A549 (cell line): ENCODE measurements at regions of chr19 and their contacts with region 1.

Region 1: GRCh38 chr19:10580979-10581631 is 6.0 kb downstream of the AP1M2 start:
- DNase-seq: peak; percentile 56 to 91
- ATAC-seq: peak; percentile 66 to 71
- H3K4me3 ChIP-seq: no peak overlapping the region
- H3K27ac ChIP-seq: peak overlapping the region in 1 of 2 experiments; percentile 53; a peak in 1 of 6 replicates
- H3K4me1 ChIP-seq: 0 out of 3 replicates have a peak, but pooled peaks cover 5% of the 10 kb centered on the region
- CTCF ChIP-seq: peak; percentile 75
- EP300 ChIP-seq: no peak
- POLR2A ChIP-seq: no peak
- RAD21 ChIP-seq: peak; percentile 87 to 93

Region 2: GRCh38 chr19:10543420-10544241 is 37.5 kb before region 1 on chr19 and contains the start of gene ATG4D:
- CTCF ChIA-PET with region 1: interaction called, 10 read pairs
- POLR2A ChIA-PET with region 1: no interaction called
- DNase-seq: peak; percentile 60 to 88
- ATAC-seq: peak; percentile 89 to 90
- H3K4me3 ChIP-seq: peak within 1 kb of the TSS; percentile 94
- H3K27ac ChIP-seq: peak within 1 kb of the TSS; percentile 91 to 99
- H3K4me1 ChIP-seq: peaks cover 6% of the 10 kb centered on the region; the same call in 2 of the 3 replicates
- CTCF ChIP-seq: no peak
- EP300 ChIP-seq: no peak
- POLR2A ChIP-seq: peak; percentile 79
- RAD21 ChIP-seq: no peak
- polyA plus RNA-seq, gene ATG4D: 6.9 and 7.3 TPM in 2 replicates

Region 3: DNA sequence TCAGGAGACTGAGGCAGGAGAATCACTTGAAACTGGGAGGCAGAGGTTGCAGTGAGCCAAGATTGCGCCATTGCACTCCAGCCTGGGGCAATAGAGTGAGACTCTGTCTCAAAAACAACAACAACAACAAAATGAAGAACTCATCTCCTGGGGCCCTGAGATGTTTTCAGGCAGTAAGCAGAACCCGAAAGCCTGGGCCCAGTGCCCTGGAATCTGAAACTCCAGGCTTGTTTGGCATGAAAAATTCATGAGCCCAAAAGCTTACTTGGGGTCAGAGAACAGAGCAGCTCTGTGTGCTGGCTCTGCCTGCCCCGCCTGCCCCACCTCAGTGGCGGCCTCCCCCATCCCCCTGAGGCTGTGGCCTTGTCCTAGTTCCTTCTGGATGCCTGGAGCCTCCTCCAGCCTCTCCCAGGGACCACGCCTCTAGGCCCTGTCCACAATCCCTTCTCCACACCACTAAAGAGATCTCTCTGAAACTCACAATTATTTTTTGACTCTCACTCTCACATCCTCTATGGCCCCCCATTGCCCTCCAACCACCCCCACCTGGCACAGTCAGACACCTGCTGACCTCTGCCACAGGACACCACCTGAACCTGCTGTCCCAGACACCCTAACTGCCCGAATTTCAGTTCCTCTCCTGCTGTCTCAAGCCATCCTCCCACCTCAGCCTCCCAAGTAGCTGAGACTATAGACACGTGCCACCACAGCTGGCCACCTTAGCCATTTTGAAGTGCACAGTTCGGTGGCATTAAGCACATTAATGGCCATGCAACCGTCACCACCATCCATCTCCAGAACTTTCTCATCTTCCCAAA is 12.9 kb after region 1 on chr19:
- CTCF ChIA-PET with region 1: interaction called, 33 read pairs
- POLR2A ChIA-PET with region 1: no interaction called
- DNase-seq: no peak
- ATAC-seq: no peak; a peak in 1 of 6 replicates
- H3K4me3 ChIP-seq: no peak overlapping the region
- H3K27ac ChIP-seq: no peak overlapping the region
- H3K4me1 ChIP-seq: no peaks in the 10 kb centered on the region
- CTCF ChIP-seq: no peak
- EP300 ChIP-seq: no peak
- POLR2A ChIP-seq: no peak
- RAD21 ChIP-seq: no peak

Region 4: GRCh38 chr19:10612491-10613119 is 31.5 kb after region 1 on chr19:
- CTCF ChIA-PET with region 1: interaction called, 11 read pairs
- POLR2A ChIA-PET with region 1: no interaction called
- DNase-seq: no peak
- ATAC-seq: no peak
- H3K4me3 ChIP-seq: no peak overlapping the region
- H3K27ac ChIP-seq: no peak overlapping the region
- H3K4me1 ChIP-seq: no peaks in the 10 kb centered on the region
- CTCF ChIP-seq: no peak
- EP300 ChIP-seq: no peak
- POLR2A ChIP-seq: no peak
- RAD21 ChIP-seq: no peak

Region 5: DNA sequence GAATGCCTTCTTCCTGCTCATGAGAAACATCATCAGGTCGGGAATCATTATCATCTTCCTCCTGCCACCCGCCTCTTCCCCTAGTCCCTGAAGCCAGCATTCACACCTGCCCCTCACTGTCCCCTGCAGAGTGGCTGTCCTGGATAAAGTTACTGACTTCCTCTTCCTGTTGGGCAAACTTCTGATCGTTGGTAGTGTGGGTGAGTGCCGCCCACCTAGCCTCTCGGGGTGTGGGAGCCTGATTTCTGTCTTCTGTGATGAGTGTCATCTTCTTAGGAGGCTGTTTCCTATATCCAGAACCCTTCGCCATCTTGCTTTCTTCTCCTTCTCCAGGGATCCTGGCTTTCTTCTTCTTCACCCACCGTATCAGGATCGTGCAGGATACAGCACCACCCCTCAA is 56.8 kb after region 1 on chr19:
- CTCF ChIA-PET with region 1: interaction called, 296 read pairs
- POLR2A ChIA-PET with region 1: no interaction called
- DNase-seq: no peak
- ATAC-seq: no peak
- H3K4me3 ChIP-seq: no peak overlapping the region
- H3K27ac ChIP-seq: no peak overlapping the region
- H3K4me1 ChIP-seq: no peaks in the 10 kb centered on the region
- CTCF ChIP-seq: no peak
- EP300 ChIP-seq: no peak
- POLR2A ChIP-seq: no peak
- RAD21 ChIP-seq: no peak

Region 6: GRCh38 chr19:10690341-10690781 is 109.3 kb after region 1 on chr19:
- CTCF ChIA-PET with region 1: interaction called, 14 read pairs
- POLR2A ChIA-PET with region 1: no interaction called
- DNase-seq: no peak
- ATAC-seq: peak in 1 of 2 experiments; percentile 2; a peak in 2 of 6 replicates
- H3K4me3 ChIP-seq: no peak overlapping the region
- H3K27ac ChIP-seq: no peak overlapping the region
- H3K4me1 ChIP-seq: 0 out of 3 replicates have a peak, but pooled peaks cover 4% of the 10 kb centered on the region
- CTCF ChIP-seq: no peak
- EP300 ChIP-seq: no peak
- POLR2A ChIP-seq: no peak
- RAD21 ChIP-seq: no peak